ENCODE measurements at regions of chr11 and their contacts with region 1.

Region 1: DNA sequence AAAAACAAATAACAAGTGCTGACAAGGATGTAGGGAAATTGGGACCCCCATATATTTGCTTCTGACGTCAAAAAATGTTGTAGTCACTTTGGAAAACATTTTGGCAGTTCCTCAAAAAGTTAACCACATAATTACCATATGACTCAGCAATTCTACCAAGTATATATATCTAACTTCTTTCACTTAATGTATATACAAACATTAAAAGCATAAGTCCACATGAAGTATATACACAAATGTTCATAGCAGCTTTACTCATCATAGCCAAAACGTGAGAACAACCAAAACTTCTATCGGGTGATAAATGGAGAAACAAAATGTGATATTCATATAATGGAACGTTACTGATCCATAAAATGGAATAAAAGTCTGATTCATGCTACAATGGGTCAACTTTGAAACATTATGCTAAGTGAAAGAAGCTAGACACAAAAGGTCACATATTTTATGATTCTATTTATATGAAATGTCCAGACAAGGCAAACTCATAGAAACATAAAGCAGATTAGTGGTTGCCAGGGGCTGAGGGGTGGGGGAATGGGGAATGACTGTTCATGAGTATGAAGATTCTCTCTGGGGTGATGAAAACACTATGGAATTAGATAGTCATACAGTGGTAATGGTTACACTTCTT is 48.7 kb upstream of the TEAD1 start:
- DNase-seq: peak; percentile 98
- ATAC-seq: peak; percentile 96
- H3K4me3 ChIP-seq: no peak overlapping the region
- H3K27ac ChIP-seq: no peak overlapping the region; the same call in 1 of the 2 replicates
- H3K4me1 ChIP-seq: peaks cover 6% of the 10 kb centered on the region
- H3K27me3 ChIP-seq: no peaks in the 10 kb centered on the region; the same call in 1 of the 2 replicates
- CTCF ChIP-seq: no peak
- POLR2A ChIP-seq: no peak
- RAD21 ChIP-seq: peak; percentile 12; the same call in 1 of the 2 replicates

Region 2: DNA sequence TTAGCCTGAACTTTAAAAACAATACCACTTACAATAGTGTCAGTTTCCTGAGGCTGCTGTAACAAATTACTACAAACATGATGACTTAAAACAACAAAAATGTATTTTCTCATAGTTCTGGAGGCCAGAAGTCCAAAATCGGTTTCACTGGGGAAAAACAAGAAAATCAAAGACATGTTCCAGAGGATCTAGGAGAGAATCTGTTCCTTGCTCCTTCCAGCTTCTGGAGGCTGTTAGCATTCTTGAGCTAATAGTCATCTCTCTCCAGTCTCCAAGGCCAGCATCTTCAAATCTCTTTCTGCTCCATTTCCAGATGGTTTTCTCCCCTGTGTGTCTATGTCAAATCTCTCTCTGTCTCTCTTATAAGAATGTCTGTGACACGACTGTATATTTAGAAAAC is 19.0 kb before region 1 on chr11:
- CTCF ChIA-PET with region 1: no interaction called
- POLR2A ChIA-PET with region 1: no interaction called
- dilution Hi-C with region 1: no loop called
- in situ Hi-C with region 1: no loop called
- intact Hi-C with region 1: loop called (anchors 2 kb)
- DNase-seq: peak; percentile 90
- ATAC-seq: peak; percentile 98
- H3K4me3 ChIP-seq: no peak overlapping the region
- H3K27ac ChIP-seq: no peak overlapping the region
- H3K4me1 ChIP-seq: peaks cover 2% of the 10 kb centered on the region
- H3K27me3 ChIP-seq: no peaks in the 10 kb centered on the region
- CTCF ChIP-seq: no peak
- POLR2A ChIP-seq: no peak
- RAD21 ChIP-seq: no peak

Region 3: GRCh38 chr11:12884751-12885318 is 259.3 kb after region 1 on chr11:
- CTCF ChIA-PET with region 1: no interaction called
- POLR2A ChIA-PET with region 1: no interaction called
- dilution Hi-C with region 1: no loop called
- in situ Hi-C with region 1: no loop called
- intact Hi-C with region 1: no loop called
- DNase-seq: no peak
- ATAC-seq: no peak; the same call in 1 of the 2 replicates
- H3K4me3 ChIP-seq: no peak overlapping the region
- H3K27ac ChIP-seq: no peak overlapping the region
- H3K4me1 ChIP-seq: peaks cover 10% of the 10 kb centered on the region
- H3K27me3 ChIP-seq: no peaks in the 10 kb centered on the region
- CTCF ChIP-seq: no peak
- POLR2A ChIP-seq: no peak
- RAD21 ChIP-seq: no peak

Measured in IMR-90 (cell line).